ENCODE measurements at regions of chr9 and their contacts with region 1.

Region 1: DNA sequence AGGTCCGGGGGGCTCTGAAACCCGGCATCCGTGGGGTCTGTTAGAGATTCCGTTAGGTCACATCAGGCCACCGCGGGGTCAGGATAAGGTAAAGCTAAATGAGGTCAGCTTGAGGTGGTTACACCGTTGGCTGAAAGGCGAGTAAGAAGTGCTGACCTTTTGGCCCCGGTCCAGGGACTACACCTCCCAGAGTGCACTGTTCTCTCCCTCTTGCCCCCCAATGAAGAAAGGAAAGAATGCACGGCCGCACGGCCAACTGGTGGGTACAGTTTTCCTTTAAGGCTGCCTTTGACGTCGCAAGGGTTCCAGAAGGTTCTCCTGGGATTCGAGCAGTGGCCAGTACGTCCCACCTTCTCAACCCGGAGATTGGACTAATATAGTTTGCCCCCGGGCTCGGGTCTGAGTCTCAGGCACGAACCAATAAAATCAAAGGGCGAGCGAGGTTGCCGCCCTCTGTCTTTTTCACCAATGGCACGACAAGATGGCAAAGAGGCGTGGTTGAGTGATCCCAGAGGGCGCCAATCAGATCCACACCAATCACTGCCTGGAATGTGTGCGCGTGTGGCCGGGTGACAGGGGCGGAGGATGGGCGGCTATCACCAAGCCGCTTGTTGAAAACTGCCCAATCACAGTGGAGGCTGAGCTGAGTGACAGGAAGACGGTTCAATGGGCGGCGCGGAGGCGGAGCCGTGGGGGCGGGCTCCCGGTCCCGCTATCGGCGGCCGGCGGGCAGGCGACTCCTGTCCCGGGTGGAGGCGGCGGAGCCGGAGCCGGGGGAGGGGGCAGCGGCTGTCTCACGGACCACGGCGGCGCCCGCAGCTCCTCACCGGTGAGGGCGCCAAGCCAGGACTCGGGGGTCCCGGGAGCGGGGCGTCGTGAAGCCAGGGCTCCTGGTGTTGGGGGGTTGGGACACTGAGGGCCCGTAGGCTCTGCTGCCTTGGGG is at the start of gene DNAJB5:
- DNase-seq: peak; percentile 96
- H3K4me3 ChIP-seq: peak within 1 kb of the TSS; percentile 70 to 94
- H3K27ac ChIP-seq: peak within 1 kb of the TSS; percentile 55 to 95
- H3K4me1 ChIP-seq: peaks cover 28 to 76% of the 10 kb centered on the region in 2 experiments
- H3K27me3 ChIP-seq: no peaks in the 10 kb centered on the region
- CTCF ChIP-seq: no peak
- EP300 ChIP-seq: peak in 1 of 2 experiments; percentile 21; a peak in 1 of 4 replicates
- RAD21 ChIP-seq: no peak
- polyA plus RNA-seq, gene DNAJB5: 3.3 and 4.0 TPM in 2 replicates

Region 2: DNA sequence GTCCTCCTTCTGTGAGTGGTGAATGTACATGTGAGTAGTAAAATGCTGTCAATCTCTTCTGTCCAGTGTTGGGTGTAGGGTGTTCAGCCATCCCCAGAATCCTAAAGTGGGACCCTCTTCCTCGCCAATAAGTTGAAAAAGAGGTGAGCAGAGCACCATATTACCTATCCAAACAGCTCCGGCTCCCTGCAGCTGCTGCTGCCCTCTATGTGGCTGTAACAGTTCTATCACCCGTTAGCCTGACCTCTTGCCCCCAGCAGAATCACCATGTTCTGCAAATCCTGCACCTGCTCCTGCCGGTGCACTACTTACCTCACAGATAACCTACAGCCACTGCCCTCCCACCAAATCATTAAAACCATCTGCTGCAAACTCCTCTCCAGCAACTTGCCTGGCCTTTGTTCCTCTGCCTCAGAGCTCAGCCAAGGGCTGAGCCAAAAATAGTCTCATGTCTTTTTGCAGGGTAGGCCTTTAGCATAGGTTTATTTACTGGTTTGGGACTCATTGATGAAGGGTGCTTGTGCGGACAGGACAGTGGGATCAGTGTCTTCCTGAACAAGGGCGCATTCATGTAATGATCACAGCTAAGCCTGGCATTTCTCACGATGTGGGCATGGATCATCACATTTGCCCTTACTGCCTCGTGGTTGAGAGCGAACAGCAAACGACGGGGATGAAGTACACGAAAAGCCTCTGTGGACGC is 229.7 kb before region 1 on chr9:
- CTCF ChIA-PET with region 1: interaction called, 21 read pairs
- POLR2A ChIA-PET with region 1: no interaction called
- DNase-seq: no peak
- H3K4me3 ChIP-seq: no peak overlapping the region
- H3K27ac ChIP-seq: no peak overlapping the region
- H3K4me1 ChIP-seq: no peaks in the 10 kb centered on the region
- H3K27me3 ChIP-seq: peaks cover 10% of the 10 kb centered on the region; the same call in 1 of the 2 replicates
- CTCF ChIP-seq: no peak
- EP300 ChIP-seq: no peak
- RAD21 ChIP-seq: no peak

Region 3: GRCh38 chr9:34961574-34962490 is 27.4 kb before region 1 on chr9:
- CTCF ChIA-PET with region 1: interaction called, 25 read pairs
- POLR2A ChIA-PET with region 1: no interaction called
- DNase-seq: no peak
- H3K4me3 ChIP-seq: no peak overlapping the region
- H3K27ac ChIP-seq: no peak overlapping the region
- H3K4me1 ChIP-seq: peaks cover 0 to 3% of the 10 kb centered on the region in 2 experiments; a peak in 1 of 4 replicates
- H3K27me3 ChIP-seq: peaks cover 63% of the 10 kb centered on the region
- CTCF ChIP-seq: no peak
- EP300 ChIP-seq: no peak
- RAD21 ChIP-seq: no peak

Region 4: DNA sequence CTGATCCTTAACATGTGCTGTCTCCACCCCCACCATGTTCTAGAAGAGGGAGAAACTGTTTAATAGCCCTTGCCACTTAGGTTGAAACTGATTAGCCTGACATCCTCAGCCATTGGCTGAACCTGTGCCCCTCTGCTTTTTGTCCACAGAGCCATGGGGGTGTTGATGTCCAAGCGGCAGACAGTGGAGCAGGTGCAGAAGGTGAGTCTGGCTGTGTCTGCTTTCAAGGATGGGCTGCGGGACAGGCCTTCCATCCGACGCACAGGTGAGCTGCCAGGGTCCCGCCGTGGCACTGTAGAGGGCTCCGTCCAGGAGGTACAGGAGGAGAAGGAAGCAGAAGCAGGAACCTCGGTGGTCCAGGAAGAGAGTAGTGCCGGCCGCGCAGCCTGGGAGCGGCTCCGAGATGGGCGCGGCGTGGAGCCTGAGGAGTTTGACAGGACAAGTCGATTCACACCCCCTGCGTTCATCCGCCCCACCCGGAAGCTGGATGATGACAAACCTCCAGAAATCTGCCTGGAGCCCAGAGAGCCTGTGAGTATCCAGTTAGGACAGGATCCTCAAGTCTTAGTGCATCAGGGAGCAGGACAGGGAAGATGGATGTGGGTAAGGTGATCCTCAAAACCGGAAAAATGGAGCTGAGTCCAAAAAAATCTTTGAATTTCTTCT is 18.0 kb before region 1 on chr9:
- CTCF ChIA-PET with region 1: interaction called, 25 read pairs
- POLR2A ChIA-PET with region 1: no interaction called
- DNase-seq: no peak
- H3K4me3 ChIP-seq: no peak overlapping the region
- H3K27ac ChIP-seq: no peak overlapping the region
- H3K4me1 ChIP-seq: no peaks in the 10 kb centered on the region
- H3K27me3 ChIP-seq: peaks cover 36% of the 10 kb centered on the region
- CTCF ChIP-seq: no peak
- EP300 ChIP-seq: no peak
- RAD21 ChIP-seq: no peak

Region 5: GRCh38 chr9:34976441-34976840 is 12.8 kb before region 1 on chr9:
- CTCF ChIA-PET with region 1: interaction called, 21 read pairs
- POLR2A ChIA-PET with region 1: no interaction called
- DNase-seq: no peak
- H3K4me3 ChIP-seq: no peak overlapping the region
- H3K27ac ChIP-seq: no peak overlapping the region
- H3K4me1 ChIP-seq: no peaks in the 10 kb centered on the region; a peak in 1 of 4 replicates
- H3K27me3 ChIP-seq: peaks cover 52% of the 10 kb centered on the region
- CTCF ChIP-seq: no peak
- EP300 ChIP-seq: no peak
- RAD21 ChIP-seq: no peak

Region 6: GRCh38 chr9:35237311-35237710 is 248.0 kb after region 1 on chr9:
- CTCF ChIA-PET with region 1: no interaction called
- POLR2A ChIA-PET with region 1: no interaction called
- DNase-seq: no peak
- H3K4me3 ChIP-seq: no peak overlapping the region
- H3K27ac ChIP-seq: no peak overlapping the region
- H3K4me1 ChIP-seq: no peaks in the 10 kb centered on the region
- H3K27me3 ChIP-seq: no peaks in the 10 kb centered on the region
- CTCF ChIP-seq: no peak
- EP300 ChIP-seq: no peak
- RAD21 ChIP-seq: no peak

Measured in SK-N-SH (cell line).